Endothelial cell of umbilical vein (primary cell): ENCODE measurements at regions of chr12 and their contacts with region 1.

Region 1: DNA sequence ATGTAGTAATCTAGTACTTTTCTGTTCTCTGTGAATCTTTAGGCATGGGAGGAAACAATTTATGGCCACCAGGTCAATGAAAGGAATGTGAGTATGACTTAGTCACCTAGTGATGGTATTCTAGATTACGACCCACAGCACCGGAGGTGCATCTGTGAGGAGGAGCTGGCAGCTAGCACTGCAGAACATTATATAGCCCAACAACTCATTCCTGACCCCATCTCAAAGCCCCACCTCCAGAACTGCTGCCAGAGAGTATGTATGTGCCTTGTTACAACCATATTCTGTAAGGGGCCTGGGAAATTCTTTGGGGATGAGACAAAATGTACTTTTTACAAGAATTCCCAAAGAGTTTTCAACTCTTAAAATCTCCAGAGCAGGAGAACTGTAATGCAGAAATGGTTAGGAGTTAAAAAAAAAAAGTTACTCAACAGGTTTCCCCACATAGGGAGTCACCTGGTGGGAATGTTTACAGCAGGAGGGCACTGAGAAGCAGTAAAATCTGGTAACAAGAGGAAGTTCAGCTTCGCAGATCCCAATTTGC is 34.9 kb upstream of the CERS5 start:
- DNase-seq: peak; percentile 81
- H3K4me3 ChIP-seq: no peak overlapping the region
- H3K27ac ChIP-seq: peak overlapping the region; percentile 75
- H3K4me1 ChIP-seq: peaks cover 40% of the 10 kb centered on the region
- H3K27me3 ChIP-seq: no peaks in the 10 kb centered on the region
- CTCF ChIP-seq: no peak
- POLR2A ChIP-seq: peak; percentile 58

Region 2: GRCh38 chr12:50187084-50187900 is 14.8 kb before region 1 on chr12:
- CTCF ChIA-PET with region 1: interaction called, 11 read pairs
- POLR2A ChIA-PET with region 1: interaction called, 3 read pairs
- dilution Hi-C with region 1: no loop called
- intact Hi-C with region 1: loop called (anchors 2 kb)
- DNase-seq: no peak
- H3K4me3 ChIP-seq: no peak overlapping the region
- H3K27ac ChIP-seq: peak overlapping the region; percentile 90
- H3K4me1 ChIP-seq: peaks cover 40% of the 10 kb centered on the region
- H3K27me3 ChIP-seq: no peaks in the 10 kb centered on the region
- CTCF ChIP-seq: no peak
- POLR2A ChIP-seq: no peak

Region 3: DNA sequence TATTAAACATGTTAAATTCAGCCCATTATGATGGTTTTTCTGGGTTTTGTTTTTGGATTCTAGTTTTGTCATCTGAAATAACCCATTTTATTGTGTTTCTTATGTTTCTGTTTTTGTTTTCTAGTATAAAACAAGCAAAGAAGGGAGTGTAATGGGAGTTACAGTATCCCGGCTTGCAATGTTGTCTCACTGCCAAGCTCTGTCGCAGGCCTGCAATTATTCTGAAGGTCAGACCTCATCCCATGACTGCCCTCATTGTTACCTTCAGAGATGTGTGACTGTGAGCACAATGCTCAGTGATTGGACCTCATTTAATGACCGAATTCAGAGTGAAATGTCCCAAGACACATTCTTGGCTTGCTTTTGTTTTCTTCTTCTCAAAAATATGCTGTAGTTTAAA is 488.9 kb after region 1 on chr12:
- CTCF ChIA-PET with region 1: no interaction called
- POLR2A ChIA-PET with region 1: no interaction called
- dilution Hi-C with region 1: no loop called
- intact Hi-C with region 1: no loop called
- DNase-seq: no peak
- H3K4me3 ChIP-seq: no peak overlapping the region
- H3K27ac ChIP-seq: no peak overlapping the region
- H3K4me1 ChIP-seq: no peaks in the 10 kb centered on the region
- H3K27me3 ChIP-seq: no peaks in the 10 kb centered on the region
- CTCF ChIP-seq: no peak
- POLR2A ChIP-seq: no peak